ENCODE measurements at regions of chr11 and their contacts with region 1.

Region 1: DNA sequence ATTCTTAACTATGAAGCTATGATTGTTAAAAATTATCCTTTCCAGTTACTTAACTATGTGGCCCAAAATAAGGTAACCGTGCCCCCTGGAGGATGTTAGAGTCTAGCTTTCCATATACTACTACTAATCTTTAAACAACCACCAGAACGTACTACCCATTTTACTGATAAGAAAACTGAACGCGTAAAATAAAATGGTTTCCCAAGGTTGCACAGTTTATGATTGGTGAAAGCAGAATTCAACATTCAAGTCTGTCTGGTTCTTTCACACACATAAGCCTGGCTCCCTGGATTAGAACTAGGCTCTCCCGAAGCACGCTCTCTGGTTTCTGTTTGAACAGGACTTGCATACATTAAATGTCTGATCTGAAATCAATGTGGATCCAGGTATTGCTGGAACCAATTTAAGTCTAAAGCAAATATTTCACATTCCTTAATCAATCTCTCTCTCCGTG is 437.9 kb upstream of the CCDC90B start:
- DNase-seq: peak; percentile 7
- H3K4me3 Mint-ChIP-seq: peak overlapping the region; percentile 60
- H3K27ac Mint-ChIP-seq: no peak overlapping the region
- H3K4me1 Mint-ChIP-seq: peaks cover 9% of the 10 kb centered on the region
- H3K27me3 Mint-ChIP-seq: peaks cover 9% of the 10 kb centered on the region
- CTCF ChIP-seq: no peak

Region 2: GRCh38 chr11:83241291-83241946 is 482.6 kb before region 1 on chr11:
- CTCF ChIA-PET with region 1: no interaction called
- intact Hi-C with region 1: loop called (anchors 1 kb)
- DNase-seq: peak; percentile 52
- H3K4me3 Mint-ChIP-seq: no peak overlapping the region
- H3K27ac Mint-ChIP-seq: no peak overlapping the region
- H3K4me1 Mint-ChIP-seq: peaks cover 9% of the 10 kb centered on the region
- H3K27me3 Mint-ChIP-seq: no peaks in the 10 kb centered on the region
- CTCF ChIP-seq: no peak

Region 3: GRCh38 chr11:83292709-83293456 is 431.2 kb before region 1 on chr11:
- CTCF ChIA-PET with region 1: interaction called, 24 read pairs
- intact Hi-C with region 1: loop called (anchors 2 kb)
- DNase-seq: peak; percentile 28
- H3K4me3 Mint-ChIP-seq: no peak overlapping the region
- H3K27ac Mint-ChIP-seq: no peak overlapping the region
- H3K4me1 Mint-ChIP-seq: no peaks in the 10 kb centered on the region
- H3K27me3 Mint-ChIP-seq: peaks cover 62% of the 10 kb centered on the region
- CTCF ChIP-seq: peak; percentile 32

Region 4: GRCh38 chr11:83628622-83629355 is 95.2 kb before region 1 on chr11:
- CTCF ChIA-PET with region 1: no interaction called
- intact Hi-C with region 1: no loop called
- DNase-seq: no peak
- H3K4me3 Mint-ChIP-seq: no peak overlapping the region
- H3K27ac Mint-ChIP-seq: no peak overlapping the region
- H3K4me1 Mint-ChIP-seq: no peaks in the 10 kb centered on the region
- H3K27me3 Mint-ChIP-seq: no peaks in the 10 kb centered on the region
- CTCF ChIP-seq: no peak

Measured in Calu3 (cell line).